ENCODE measurements at regions of chr19 and their contacts with region 1.

Region 1: GRCh38 chr19:19385108-19385899 is 20.2 kb upstream of the GATAD2A start:
- DNase-seq: peak; percentile 100
- H3K4me3 ChIP-seq: peak overlapping the region; percentile 94
- H3K27ac ChIP-seq: no peak overlapping the region
- H3K4me1 ChIP-seq: peaks cover 57% of the 10 kb centered on the region
- CTCF ChIP-seq: no peak

Region 2: GRCh38 chr19:19361075-19361594 is 24.2 kb before region 1 on chr19:
- CTCF ChIA-PET with region 1: no interaction called
- POLR2A ChIA-PET with region 1: interaction called, 6 read pairs
- intact Hi-C with region 1: loop called (anchors 1 kb)
- DNase-seq: peak; percentile 81
- H3K4me3 ChIP-seq: no peak overlapping the region
- H3K27ac ChIP-seq: peak overlapping the region; percentile 20
- H3K4me1 ChIP-seq: peaks cover 30% of the 10 kb centered on the region
- CTCF ChIP-seq: peak; percentile 84

Region 3: GRCh38 chr19:19372656-19373416 is 12.5 kb before region 1 on chr19:
- CTCF ChIA-PET with region 1: no interaction called
- POLR2A ChIA-PET with region 1: interaction called, 11 read pairs
- intact Hi-C with region 1: loop called (anchors 1 kb)
- DNase-seq: peak; percentile 90
- H3K4me3 ChIP-seq: peak overlapping the region; percentile 45
- H3K27ac ChIP-seq: peak overlapping the region; percentile 85
- H3K4me1 ChIP-seq: peaks cover 34% of the 10 kb centered on the region
- CTCF ChIP-seq: no peak

Region 4: DNA sequence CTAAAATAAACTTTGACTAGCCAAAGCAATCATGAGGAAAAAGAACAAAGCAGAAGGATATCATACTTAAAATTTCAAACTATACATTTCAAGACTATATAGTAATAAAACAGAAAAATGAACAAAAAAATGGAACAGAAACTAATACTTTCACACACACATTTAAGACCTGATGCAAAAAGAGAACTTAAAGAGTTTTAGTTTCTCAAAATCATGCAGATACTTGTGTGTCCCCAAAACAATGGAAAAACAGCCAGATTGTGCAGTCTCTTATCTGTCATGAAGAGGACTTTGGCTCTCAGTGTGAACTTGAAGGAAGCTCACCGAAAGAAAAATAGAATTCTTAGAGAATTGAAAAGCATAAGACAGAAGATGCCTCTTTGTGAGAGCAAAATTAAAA is 420.2 kb after region 1 on chr19:
- CTCF ChIA-PET with region 1: no interaction called
- POLR2A ChIA-PET with region 1: no interaction called
- intact Hi-C with region 1: no loop called
- DNase-seq: no peak
- H3K4me3 ChIP-seq: no peak overlapping the region
- H3K27ac ChIP-seq: no peak overlapping the region
- H3K4me1 ChIP-seq: no peaks in the 10 kb centered on the region
- CTCF ChIP-seq: no peak